ENCODE measurements at regions of chr20 and their contacts with region 1.

Region 1: GRCh38 chr20:53216856-53217576 is 244.9 kb downstream of the TSHZ2 start:
- DNase-seq: peak; percentile 69 to 90 (median 83)
- ATAC-seq: peak; percentile 82
- H3K4me3 ChIP-seq: peak overlapping the region; percentile 35
- H3K4me3 Mint-ChIP-seq: peak overlapping the region; percentile 70
- H3K27ac ChIP-seq: no peak overlapping the region
- H3K27ac Mint-ChIP-seq: peak overlapping the region; percentile 78
- H3K4me1 ChIP-seq: peaks cover 28% of the 10 kb centered on the region
- H3K4me1 Mint-ChIP-seq: peaks cover 44% of the 10 kb centered on the region
- H3K27me3 ChIP-seq: no peaks in the 10 kb centered on the region
- H3K27me3 Mint-ChIP-seq: no peaks in the 10 kb centered on the region
- CTCF ChIP-seq: peak; percentile 99

Region 2: DNA sequence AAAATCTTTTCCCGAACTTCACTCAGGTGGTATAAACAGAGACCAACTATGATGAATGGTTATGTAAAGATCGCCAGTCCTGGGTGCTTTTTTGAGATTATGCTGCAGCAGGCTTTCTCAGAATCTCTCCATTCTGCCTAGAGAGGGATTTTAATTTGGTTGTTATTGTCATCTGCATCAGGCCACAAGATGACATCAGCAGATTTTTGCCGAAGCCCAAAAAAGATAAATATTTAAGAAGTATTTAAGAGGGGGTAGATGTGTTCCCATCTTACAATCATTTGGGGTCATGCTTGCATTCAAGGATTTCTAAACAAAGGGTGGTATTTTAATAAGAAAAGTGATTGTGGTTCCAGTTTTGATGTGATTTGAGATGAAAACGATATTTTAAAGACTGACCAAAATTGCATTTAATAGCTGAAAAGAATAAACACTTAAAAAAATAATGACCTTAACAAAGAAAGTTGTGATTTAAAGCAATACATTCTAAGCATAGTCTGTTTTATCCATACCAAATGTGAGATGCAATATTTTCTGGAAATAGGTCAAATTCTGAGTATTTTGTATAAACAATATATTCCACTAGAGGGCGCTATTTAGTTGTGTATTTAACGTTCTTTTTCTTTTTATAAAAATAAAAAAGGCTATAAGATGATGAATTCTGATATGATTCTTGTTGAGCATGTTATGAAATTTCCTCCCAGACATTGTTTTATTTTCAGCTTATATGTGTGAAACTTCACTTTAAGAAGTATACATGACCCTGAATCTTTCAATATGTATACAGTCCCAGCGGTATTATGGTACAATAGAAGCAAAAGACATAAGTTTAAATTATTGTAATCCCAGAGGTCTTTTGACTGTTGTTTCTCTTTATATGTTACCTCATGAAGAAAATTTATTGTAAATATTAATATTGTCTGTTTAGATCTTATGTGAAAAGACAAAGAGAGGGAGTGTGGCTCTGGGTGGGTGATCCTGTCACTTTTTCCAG is 974.5 kb before region 1 on chr20:
- CTCF ChIA-PET with region 1: no interaction called
- POLR2A ChIA-PET with region 1: no interaction called
- intact Hi-C with region 1: loop called (anchors 1 to 2 kb)
- DNase-seq: peak in 3 of 14 experiments; percentile 12 to 42 (median 34)
- ATAC-seq: no peak
- H3K4me3 ChIP-seq: no peak overlapping the region
- H3K4me3 Mint-ChIP-seq: no peak overlapping the region
- H3K27ac ChIP-seq: no peak overlapping the region
- H3K27ac Mint-ChIP-seq: no peak overlapping the region
- H3K4me1 ChIP-seq: no peaks in the 10 kb centered on the region
- H3K4me1 Mint-ChIP-seq: peaks cover 5% of the 10 kb centered on the region
- H3K27me3 ChIP-seq: no peaks in the 10 kb centered on the region
- H3K27me3 Mint-ChIP-seq: peaks cover 7% of the 10 kb centered on the region
- CTCF ChIP-seq: peak; percentile 83

Region 3: DNA sequence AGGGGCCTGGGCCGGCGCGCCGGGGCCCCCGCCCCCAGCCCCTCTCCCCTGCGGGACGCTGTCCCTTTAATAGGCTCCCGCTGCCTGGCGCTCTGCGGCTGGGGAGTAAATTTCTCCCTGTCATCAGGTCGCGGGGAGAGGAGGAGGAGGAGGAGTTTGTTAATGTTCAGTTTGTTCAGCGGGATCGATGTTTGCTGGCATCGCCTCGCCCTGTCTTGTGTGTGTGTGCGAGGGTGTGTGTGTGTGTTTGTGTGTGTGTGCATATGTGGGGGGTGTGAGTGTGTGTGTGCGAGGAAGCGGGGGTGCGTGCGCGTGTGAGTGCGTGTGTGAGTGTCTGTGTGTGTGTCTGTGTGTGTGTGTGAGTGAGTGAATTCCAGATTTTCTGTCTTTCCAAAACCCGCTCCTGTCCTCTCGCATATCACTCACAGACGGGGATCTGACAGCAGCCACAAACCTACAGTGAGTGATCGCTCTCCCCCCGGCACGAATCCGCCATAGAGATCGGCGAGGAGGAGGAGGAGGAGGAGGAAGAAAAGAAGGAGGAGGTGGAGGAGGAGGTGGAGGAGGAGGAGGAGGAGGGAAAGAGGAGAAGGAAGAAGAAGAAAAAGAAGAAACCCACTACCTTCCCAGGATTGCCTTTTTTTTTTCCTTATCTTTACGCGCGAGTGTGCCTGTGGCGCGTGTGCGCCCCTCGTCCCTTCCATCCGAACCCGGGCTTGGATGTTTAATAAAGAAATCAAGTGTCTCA is 244.7 kb before region 1 on chr20 and contains the start of gene TSHZ2:
- CTCF ChIA-PET with region 1: no interaction called
- POLR2A ChIA-PET with region 1: interaction called, 3 read pairs
- intact Hi-C with region 1: loop called in 1 of 2 experiments (anchors 10 kb)
- DNase-seq: peak; percentile 39 to 76 (median 56)
- ATAC-seq: peak; percentile 50
- H3K4me3 ChIP-seq: peak within 1 kb of the TSS; percentile 77
- H3K4me3 Mint-ChIP-seq: peak within 1 kb of the TSS; percentile 95
- H3K27ac ChIP-seq: peak within 1 kb of the TSS; percentile 81 to 85
- H3K27ac Mint-ChIP-seq: peak within 1 kb of the TSS; percentile 89
- H3K4me1 ChIP-seq: peaks cover 5% of the 10 kb centered on the region
- H3K4me1 Mint-ChIP-seq: peaks cover 48% of the 10 kb centered on the region
- H3K27me3 ChIP-seq: peaks cover 0 to 8% of the 10 kb centered on the region in 2 experiments
- H3K27me3 Mint-ChIP-seq: peaks cover 6% of the 10 kb centered on the region
- CTCF ChIP-seq: no peak
- total RNA-seq, gene TSHZ2: 26.1 to 27.4 TPM

Region 4: GRCh38 chr20:53187392-53188068 is 29.5 kb before region 1 on chr20:
- CTCF ChIA-PET with region 1: no interaction called
- POLR2A ChIA-PET with region 1: no interaction called
- intact Hi-C with region 1: no loop called
- DNase-seq: no peak
- ATAC-seq: no peak
- H3K4me3 ChIP-seq: no peak overlapping the region
- H3K4me3 Mint-ChIP-seq: no peak overlapping the region
- H3K27ac ChIP-seq: no peak overlapping the region
- H3K27ac Mint-ChIP-seq: no peak overlapping the region
- H3K4me1 ChIP-seq: no peaks in the 10 kb centered on the region
- H3K4me1 Mint-ChIP-seq: peaks cover 16% of the 10 kb centered on the region
- H3K27me3 ChIP-seq: no peaks in the 10 kb centered on the region
- H3K27me3 Mint-ChIP-seq: no peaks in the 10 kb centered on the region
- CTCF ChIP-seq: no peak

Region 5: DNA sequence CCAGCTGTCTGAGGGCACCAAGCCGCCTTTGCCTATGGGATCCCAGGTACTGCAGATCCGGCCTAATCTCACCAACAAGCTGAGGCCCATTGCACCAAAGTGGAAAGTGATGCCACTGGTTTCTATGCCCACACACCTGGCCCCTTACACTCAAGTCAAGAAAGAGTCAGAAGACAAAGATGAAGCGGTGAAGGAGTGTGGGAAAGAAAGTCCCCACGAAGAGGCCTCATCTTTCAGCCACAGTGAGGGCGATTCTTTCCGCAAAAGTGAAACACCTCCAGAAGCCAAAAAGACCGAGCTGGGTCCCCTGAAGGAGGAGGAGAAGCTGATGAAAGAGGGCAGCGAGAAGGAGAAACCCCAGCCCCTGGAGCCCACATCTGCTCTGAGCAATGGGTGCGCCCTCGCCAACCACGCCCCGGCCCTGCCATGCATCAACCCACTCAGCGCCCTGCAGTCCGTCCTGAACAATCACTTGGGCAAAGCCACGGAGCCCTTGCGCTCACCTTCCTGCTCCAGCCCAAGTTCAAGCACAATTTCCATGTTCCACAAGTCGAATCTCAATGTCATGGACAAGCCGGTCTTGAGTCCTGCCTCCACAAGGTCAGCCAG is 38.2 kb after region 1 on chr20:
- CTCF ChIA-PET with region 1: no interaction called
- POLR2A ChIA-PET with region 1: no interaction called
- intact Hi-C with region 1: no loop called
- DNase-seq: no peak
- ATAC-seq: no peak
- H3K4me3 ChIP-seq: no peak overlapping the region
- H3K4me3 Mint-ChIP-seq: no peak overlapping the region
- H3K27ac ChIP-seq: no peak overlapping the region
- H3K27ac Mint-ChIP-seq: no peak overlapping the region
- H3K4me1 ChIP-seq: no peaks in the 10 kb centered on the region
- H3K4me1 Mint-ChIP-seq: no peaks in the 10 kb centered on the region
- H3K27me3 ChIP-seq: no peaks in the 10 kb centered on the region
- H3K27me3 Mint-ChIP-seq: no peaks in the 10 kb centered on the region
- CTCF ChIP-seq: no peak

Region 6: DNA sequence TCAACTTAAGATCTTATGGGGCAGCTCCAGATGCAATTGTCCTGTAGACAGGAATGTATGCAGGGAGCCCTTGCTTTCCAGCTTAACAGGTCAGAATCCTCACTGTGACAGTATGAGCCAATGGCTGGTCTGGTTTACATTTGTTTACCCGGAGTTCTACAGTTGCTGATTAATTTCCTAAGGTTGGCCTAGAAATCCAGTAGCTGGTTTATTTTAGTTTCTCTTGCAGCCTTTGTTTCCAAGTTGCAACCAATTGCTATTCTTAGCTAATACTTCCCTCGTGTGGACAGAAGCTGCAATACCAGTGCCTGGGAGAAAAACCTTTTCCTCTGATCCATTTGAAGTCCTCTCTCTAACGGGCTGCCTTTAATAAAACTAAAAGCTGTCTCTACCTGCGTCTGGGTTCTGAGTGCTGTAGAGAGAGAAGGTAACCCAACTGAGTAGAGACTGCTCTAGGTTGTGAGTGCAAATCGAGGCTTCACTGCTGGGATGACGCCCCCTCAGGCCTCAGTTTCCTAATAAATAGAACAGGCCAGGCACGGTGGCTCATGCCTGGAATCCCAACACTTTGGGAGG is 330.7 kb after region 1 on chr20:
- CTCF ChIA-PET with region 1: no interaction called
- POLR2A ChIA-PET with region 1: no interaction called
- intact Hi-C with region 1: loop called in 1 of 2 experiments (anchors 10 kb)
- DNase-seq: peak in 9 of 14 experiments; percentile 3 to 61 (median 26)
- ATAC-seq: peak; percentile 67
- H3K4me3 ChIP-seq: no peak overlapping the region
- H3K4me3 Mint-ChIP-seq: no peak overlapping the region
- H3K27ac ChIP-seq: no peak overlapping the region
- H3K27ac Mint-ChIP-seq: no peak overlapping the region
- H3K4me1 ChIP-seq: no peaks in the 10 kb centered on the region
- H3K4me1 Mint-ChIP-seq: peaks cover 5% of the 10 kb centered on the region
- H3K27me3 ChIP-seq: no peaks in the 10 kb centered on the region
- H3K27me3 Mint-ChIP-seq: no peaks in the 10 kb centered on the region
- CTCF ChIP-seq: peak; percentile 66

Region 7: GRCh38 chr20:54199721-54200176 is 982.7 kb after region 1 on chr20:
- CTCF ChIA-PET with region 1: no interaction called
- POLR2A ChIA-PET with region 1: no interaction called
- intact Hi-C with region 1: loop called in 1 of 2 experiments (anchors 10 kb)
- DNase-seq: peak; percentile 35 to 79 (median 60)
- ATAC-seq: peak; percentile 71
- H3K4me3 ChIP-seq: no peak overlapping the region
- H3K4me3 Mint-ChIP-seq: no peak overlapping the region
- H3K27ac ChIP-seq: no peak overlapping the region
- H3K27ac Mint-ChIP-seq: no peak overlapping the region
- H3K4me1 ChIP-seq: no peaks in the 10 kb centered on the region
- H3K4me1 Mint-ChIP-seq: no peaks in the 10 kb centered on the region
- H3K27me3 ChIP-seq: no peaks in the 10 kb centered on the region
- H3K27me3 Mint-ChIP-seq: no peaks in the 10 kb centered on the region
- CTCF ChIP-seq: peak; percentile 90

Measured in CD4-positive, alpha-beta T cell (primary cell).